ENCODE measurements at regions of chr1 and their contacts with region 1.

Region 1: GRCh38 chr1:205485338-205486228 is 18.9 kb upstream of the CDK18 start:
- DNase-seq: peak; percentile 72
- H3K4me3 ChIP-seq: no peak overlapping the region
- H3K27ac ChIP-seq: no peak overlapping the region
- H3K4me1 ChIP-seq: no peaks in the 10 kb centered on the region
- H3K27me3 ChIP-seq: no peaks in the 10 kb centered on the region
- CTCF ChIP-seq: peak; percentile 97

Region 2: DNA sequence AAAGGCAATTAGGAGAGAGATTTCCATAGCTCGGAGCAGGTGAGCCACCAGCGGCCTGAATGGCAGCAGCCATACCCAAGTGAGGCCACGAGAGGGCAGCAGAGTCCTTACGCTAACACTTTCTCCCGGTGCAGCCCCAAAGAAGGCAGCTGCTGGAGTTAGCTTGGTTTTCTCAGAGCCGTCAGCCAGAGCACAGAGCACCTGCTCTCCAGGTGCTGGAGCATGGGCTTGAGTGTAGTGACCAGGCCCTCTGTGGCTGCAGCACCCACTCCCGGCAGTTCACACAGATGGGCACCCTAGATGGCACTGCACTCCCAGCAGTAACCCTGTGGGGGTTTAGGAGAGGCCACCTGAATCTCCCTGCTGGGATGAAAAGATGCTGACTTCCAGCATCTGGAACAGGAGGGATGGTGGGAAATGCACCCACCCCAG is 212.0 kb before region 1 on chr1:
- intact Hi-C with region 1: loop called (anchors 10 kb)
- DNase-seq: peak; percentile 90
- H3K4me3 ChIP-seq: no peak overlapping the region
- H3K27ac ChIP-seq: no peak overlapping the region
- H3K4me1 ChIP-seq: peaks cover 8% of the 10 kb centered on the region
- H3K27me3 ChIP-seq: no peaks in the 10 kb centered on the region
- CTCF ChIP-seq: peak; percentile 100

Region 3: DNA sequence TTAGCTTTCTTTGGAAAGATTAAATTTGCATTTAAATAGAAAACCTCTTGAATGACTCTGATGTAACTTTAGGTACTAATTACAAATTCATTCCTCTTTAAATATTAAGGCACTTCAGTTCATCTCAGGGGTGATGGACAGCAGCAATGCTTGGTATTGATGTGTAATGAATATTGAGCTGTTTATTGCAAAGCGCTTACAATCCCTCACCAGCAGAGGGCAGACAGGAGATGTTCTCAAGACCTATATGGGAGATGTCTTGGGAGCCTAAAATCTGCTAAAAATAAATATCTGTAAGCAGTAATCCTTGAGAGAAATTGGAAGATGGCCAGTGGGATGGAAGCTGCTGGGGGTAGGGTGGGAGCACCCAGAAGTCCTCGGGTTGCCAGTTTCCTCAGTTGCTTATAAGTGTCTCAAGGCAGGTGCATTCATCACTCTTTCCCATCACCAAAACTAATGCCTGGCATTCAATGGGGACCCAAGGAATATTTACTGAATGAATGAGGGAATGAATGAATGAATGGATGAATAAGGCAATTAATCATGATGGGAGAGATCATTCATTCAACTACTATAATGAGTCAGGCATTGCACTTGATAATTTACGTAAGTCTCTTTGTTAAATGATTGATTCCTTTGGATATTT is 131.2 kb before region 1 on chr1:
- intact Hi-C with region 1: loop called (anchors 5 kb)
- DNase-seq: peak; percentile 77
- H3K4me3 ChIP-seq: no peak overlapping the region
- H3K27ac ChIP-seq: peak overlapping the region; percentile 52
- H3K4me1 ChIP-seq: no peaks in the 10 kb centered on the region
- H3K27me3 ChIP-seq: no peaks in the 10 kb centered on the region
- CTCF ChIP-seq: peak; percentile 74

Region 4: DNA sequence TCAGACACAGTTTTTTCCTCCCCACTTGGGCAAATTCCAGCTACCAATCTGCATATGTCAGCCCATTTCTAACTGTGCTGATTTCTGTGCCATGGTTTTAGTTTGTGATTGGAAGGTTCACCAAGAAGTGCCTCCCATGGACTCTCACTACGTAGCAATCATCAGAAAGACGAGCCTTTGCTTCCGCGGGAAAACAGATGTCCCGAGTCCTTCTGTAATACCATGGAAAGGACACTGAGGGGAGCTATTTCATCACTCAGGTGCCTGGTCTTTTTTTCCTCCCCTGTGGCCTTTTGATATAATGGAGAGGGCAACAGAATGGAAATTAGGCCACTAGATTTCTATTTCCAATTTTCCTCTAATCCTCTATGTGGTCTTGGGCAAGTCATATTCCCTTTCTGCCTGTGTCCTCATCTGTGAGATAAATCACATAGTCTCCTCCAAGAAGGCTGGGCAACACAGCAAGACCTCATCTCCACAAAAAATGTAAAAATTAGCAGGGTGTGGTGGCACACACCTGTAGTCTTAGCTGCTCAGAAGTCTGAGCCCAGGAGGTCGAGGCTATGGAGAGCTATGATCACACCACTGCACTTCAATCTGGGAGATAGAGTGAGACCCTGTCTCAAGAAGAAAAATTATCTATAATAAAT is 88.5 kb before region 1 on chr1:
- intact Hi-C with region 1: loop called (anchors 1 kb)
- DNase-seq: peak; percentile 28
- H3K4me3 ChIP-seq: no peak overlapping the region
- H3K27ac ChIP-seq: no peak overlapping the region
- H3K4me1 ChIP-seq: no peaks in the 10 kb centered on the region
- H3K27me3 ChIP-seq: no peaks in the 10 kb centered on the region
- CTCF ChIP-seq: peak; percentile 61

Region 5: DNA sequence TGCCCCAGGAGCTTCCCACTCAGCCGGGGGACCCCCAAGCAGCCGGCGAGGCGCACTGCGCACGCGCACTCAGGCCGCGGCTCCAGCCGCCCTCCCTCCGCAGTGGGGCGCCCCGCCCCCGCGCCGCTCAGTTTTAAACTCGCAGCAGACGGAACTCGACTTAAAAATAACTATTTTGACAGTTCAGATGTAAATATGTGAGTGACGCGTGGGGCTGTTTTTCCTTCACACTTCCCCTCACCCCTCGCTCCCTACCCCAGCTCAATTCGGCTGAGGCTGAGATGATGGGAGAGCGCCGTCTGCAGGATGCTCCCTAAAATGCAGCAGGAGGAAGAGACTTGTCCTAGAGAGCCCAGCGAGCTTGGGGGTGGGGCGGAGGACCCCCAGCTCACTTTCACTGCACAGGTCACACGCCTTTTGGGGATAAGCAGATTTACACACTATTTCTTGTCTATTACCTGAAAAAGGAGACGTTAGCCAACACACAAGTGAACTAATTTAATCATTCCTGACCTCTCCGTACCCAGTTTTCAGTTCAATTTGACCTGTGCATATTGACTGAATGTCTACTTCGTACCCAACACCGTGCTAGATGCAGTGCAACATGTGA is 54.8 kb before region 1 on chr1:
- intact Hi-C with region 1: loop called (anchors 5 kb)
- DNase-seq: peak; percentile 80
- H3K4me3 ChIP-seq: peak overlapping the region; percentile 48
- H3K27ac ChIP-seq: no peak overlapping the region
- H3K4me1 ChIP-seq: peaks cover 4% of the 10 kb centered on the region
- H3K27me3 ChIP-seq: no peaks in the 10 kb centered on the region
- CTCF ChIP-seq: peak; percentile 69

Region 6: DNA sequence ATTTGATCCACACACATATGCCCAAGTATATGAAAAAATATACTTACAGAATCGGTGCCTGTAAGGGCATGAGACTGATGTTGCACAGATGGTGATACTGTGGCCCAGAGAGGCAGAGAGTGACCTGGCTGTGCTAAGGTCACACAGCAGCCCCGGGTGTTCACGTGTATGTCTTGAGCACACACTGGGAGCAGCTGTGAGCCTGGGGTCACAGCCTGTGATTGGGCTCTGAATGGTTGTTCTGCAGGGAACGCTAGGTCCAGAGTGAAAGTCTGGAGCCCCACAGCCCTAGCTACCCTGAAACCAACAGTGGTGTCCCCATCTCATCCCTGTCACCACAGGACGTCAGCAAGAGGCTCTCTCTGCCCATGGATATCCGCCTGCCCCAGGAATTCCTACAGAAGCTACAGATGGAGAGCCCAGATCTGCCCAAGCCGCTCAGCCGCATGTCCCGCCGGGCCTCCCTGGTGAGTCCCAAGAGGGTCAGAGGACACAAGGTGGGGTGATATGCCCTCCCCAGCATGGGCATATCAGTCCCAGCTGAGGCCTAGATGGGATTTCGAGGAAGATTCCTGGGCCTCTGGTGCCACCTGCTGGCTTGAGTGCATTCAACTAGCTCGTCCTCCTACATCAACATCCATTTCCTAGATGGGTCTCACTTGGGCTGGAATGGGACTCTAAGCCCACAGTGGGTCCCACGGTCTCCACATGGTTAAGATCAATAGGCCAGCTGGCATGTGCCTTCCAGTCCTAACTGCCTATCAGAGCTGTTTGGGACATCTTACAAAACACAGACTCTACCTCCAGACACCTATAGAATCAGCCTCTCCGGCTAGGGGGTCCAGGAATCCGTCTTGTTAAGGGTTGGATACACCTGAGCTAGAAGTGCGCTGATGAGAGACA is 38.6 kb after region 1 on chr1:
- intact Hi-C with region 1: loop called (anchors 2 kb)
- DNase-seq: peak; percentile 89
- H3K4me3 ChIP-seq: no peak overlapping the region
- H3K27ac ChIP-seq: no peak overlapping the region
- H3K4me1 ChIP-seq: peaks cover 8% of the 10 kb centered on the region
- H3K27me3 ChIP-seq: no peaks in the 10 kb centered on the region
- CTCF ChIP-seq: peak; percentile 67